Naive thymus-derived CD8-positive, alpha-beta T cell (primary cell): ENCODE measurements at regions of chr20 and their contacts with region 1.

Region 1: GRCh38 chr20:35771689-35772562 is at the start of gene PHF20:
- DNase-seq: peak; percentile 99 to 100 (median 100)
- ATAC-seq: peak; percentile 81 to 87
- H3K4me3 Mint-ChIP-seq: peak within 1 kb of the TSS; percentile 84 to 98 (median 93)
- H3K27ac Mint-ChIP-seq: peak within 1 kb of the TSS; percentile 98 to 100 (median 100)
- H3K4me1 Mint-ChIP-seq: peaks cover 45 to 91% (median 75%) of the 10 kb centered on the region in 4 donors
- H3K27me3 Mint-ChIP-seq: no peaks in the 10 kb centered on the region
- polyA plus RNA-seq, gene PHF20: 114 to 135 (median 125) TPM

Region 2: GRCh38 chr20:35619196-35620095 is 152.5 kb before region 1 on chr20:
- POLR2A ChIA-PET with region 1: interaction called, 10 read pairs
- DNase-seq: peak; percentile 65 to 83 (median 71)
- ATAC-seq: peak; percentile 27 to 33
- H3K4me3 Mint-ChIP-seq: peak overlapping the region; percentile 87 to 93 (median 89)
- H3K27ac Mint-ChIP-seq: peak overlapping the region; percentile 66 to 95 (median 87)
- H3K4me1 Mint-ChIP-seq: peaks cover 16 to 44% (median 39%) of the 10 kb centered on the region in 4 donors
- H3K27me3 Mint-ChIP-seq: no peaks in the 10 kb centered on the region

Region 3: DNA sequence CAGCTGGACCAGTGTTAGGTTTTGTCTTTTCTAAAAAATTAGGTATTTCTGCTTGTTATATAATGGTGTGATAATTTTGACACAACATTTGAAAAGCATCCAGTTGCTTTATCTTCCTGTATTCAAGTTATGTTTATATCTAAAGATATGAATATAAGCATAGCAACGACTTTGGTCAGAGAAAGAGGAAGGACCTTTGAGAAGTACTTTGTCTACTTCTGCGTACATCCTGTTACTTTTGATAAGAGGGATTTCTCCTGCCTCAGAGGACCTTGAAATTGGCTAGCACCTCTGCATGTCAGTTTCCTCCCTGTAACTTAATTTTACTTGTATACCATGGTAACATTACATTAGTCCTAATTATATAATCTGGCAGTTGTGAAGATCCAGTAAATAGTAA is 24.6 kb after region 1 on chr20:
- POLR2A ChIA-PET with region 1: interaction called, 12 read pairs
- DNase-seq: peak in 6 of 10 donors; percentile 26 to 76 (median 58)
- ATAC-seq: peak; percentile 81 to 95
- H3K4me3 Mint-ChIP-seq: peak overlapping the region; percentile 13 to 79 (median 54)
- H3K27ac Mint-ChIP-seq: peak overlapping the region; percentile 79 to 99 (median 96)
- H3K4me1 Mint-ChIP-seq: peaks cover 12 to 71% (median 56%) of the 10 kb centered on the region in 4 donors
- H3K27me3 Mint-ChIP-seq: no peaks in the 10 kb centered on the region